Posterior vena cava (tissue), 2 donors: ENCODE measurements at regions of chr19 and their contacts with region 1.

Region 1: GRCh38 chr19:49820125-49820524 is 2.0 kb downstream of the MED25 start:
- DNase-seq: no peak

Region 2: DNA sequence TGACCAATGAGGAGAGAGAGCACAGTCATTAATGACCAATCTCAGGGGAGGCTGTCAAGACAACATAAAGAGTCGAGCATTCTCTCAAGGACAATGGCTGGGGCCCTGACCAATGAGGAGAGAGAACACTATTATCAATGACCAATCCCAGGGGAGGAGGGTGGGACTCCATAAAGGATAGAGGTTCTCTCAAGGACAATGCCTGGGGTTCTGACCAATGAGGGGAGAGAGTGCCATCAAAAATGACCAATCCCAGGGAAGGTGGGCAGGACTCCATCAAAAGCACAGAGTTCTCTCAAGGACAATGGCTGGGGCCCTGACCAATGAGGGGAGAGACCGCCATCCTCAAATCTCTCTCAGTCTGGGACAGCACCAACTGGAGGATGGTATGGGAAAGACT is 1209.6 kb after region 1 on chr19:
- intact Hi-C with region 1: loop called in 1 of 2 experiments (anchors 10 kb)
- DNase-seq: no peak